Caco-2 (cell line): ENCODE measurements at regions of chr10 and their contacts with region 1.

Region 1: GRCh38 chr10:12710594-12711349 is 290.7 kb downstream of the CCDC3 start:
- DNase-seq: peak; percentile 74 to 90
- H3K4me3 ChIP-seq: no peak overlapping the region
- H3K4me3 Mint-ChIP-seq: peak overlapping the region; percentile 17
- H3K27ac Mint-ChIP-seq: peak overlapping the region; percentile 91
- H3K4me1 ChIP-seq: peaks cover 26% of the 10 kb centered on the region
- H3K4me1 Mint-ChIP-seq: peaks cover 34% of the 10 kb centered on the region
- H3K27me3 ChIP-seq: no peaks in the 10 kb centered on the region
- H3K27me3 Mint-ChIP-seq: no peaks in the 10 kb centered on the region
- CTCF ChIP-seq: peak; percentile 96 to 99

Region 2: DNA sequence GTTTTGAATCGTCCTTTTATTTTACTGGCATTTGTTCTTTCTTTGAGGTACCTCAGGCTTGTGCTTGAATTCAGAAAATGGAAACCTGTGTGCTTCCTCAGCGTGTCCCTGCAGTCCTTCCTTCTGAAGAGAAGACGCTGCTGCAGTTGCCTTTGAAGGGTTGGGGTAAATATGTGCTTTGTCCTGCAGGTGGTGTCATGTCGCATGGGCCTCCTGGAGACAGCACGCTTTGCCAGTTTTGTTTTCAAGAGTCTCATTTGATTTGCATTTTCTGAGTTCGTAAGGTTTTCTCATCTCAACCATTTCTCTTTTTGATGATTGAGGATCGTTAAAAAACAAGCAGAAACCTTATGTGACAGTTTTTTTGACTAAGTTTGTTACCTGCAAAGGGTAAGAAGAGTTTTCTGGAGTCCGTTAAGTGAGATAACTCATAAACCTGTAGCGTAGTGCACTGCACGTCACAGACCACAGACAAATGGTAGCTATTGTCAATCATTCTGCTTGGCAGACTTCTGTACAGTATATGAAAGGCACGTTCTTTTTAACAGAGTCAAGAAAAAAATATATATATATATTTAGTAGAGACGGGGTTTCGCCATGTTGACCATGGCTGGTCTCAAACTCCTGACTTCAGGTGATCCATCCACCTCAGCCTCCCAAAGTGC is 457.8 kb before region 1 on chr10:
- CTCF ChIA-PET with region 1: no interaction called
- POLR2A ChIA-PET with region 1: no interaction called
- intact Hi-C with region 1: loop called (anchors 2 kb)
- DNase-seq: peak; percentile 56 to 58
- H3K4me3 ChIP-seq: no peak overlapping the region
- H3K4me3 Mint-ChIP-seq: no peak overlapping the region
- H3K27ac Mint-ChIP-seq: no peak overlapping the region
- H3K4me1 ChIP-seq: 0 out of 2 replicates have a peak, but pooled peaks cover 3% of the 10 kb centered on the region
- H3K4me1 Mint-ChIP-seq: no peaks in the 10 kb centered on the region
- H3K27me3 ChIP-seq: no peaks in the 10 kb centered on the region
- H3K27me3 Mint-ChIP-seq: no peaks in the 10 kb centered on the region
- CTCF ChIP-seq: peak; percentile 64 to 82

Region 3: GRCh38 chr10:12568391-12569009 is 142.3 kb before region 1 on chr10:
- CTCF ChIA-PET with region 1: no interaction called
- POLR2A ChIA-PET with region 1: no interaction called
- intact Hi-C with region 1: no loop called
- DNase-seq: no peak
- H3K4me3 ChIP-seq: no peak overlapping the region
- H3K4me3 Mint-ChIP-seq: no peak overlapping the region
- H3K27ac Mint-ChIP-seq: no peak overlapping the region
- H3K4me1 ChIP-seq: no peaks in the 10 kb centered on the region
- H3K4me1 Mint-ChIP-seq: no peaks in the 10 kb centered on the region
- H3K27me3 ChIP-seq: no peaks in the 10 kb centered on the region
- H3K27me3 Mint-ChIP-seq: no peaks in the 10 kb centered on the region
- CTCF ChIP-seq: no peak

Region 4: DNA sequence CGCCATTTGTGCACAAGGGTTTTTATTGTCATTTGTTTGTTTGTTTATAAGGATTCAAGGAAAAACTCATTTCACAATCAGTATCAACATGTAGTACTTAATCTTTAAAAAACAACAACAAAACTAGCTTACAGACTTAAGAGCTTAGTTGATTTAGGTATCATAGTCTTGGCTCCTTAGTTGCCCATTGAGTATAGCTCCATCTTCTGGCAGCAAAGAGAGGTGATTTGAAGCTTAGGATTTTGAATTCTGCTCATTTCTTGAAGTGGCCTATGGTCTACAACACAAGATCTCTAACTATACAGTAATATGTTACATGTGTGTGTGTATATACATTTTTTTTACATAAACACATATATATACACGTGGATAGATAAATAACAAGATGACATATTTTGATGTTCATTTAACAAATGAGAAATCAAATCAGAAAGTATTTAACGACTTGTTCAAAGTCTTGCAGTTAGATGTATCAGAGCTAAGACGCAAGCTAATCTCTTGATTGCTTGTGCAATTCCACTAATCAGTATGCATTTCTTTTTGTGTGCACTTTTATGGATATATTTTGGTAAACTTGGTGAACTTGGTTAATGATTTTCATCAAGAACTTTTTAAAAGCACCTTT is 54.1 kb before region 1 on chr10:
- CTCF ChIA-PET with region 1: interaction called, 3 read pairs
- POLR2A ChIA-PET with region 1: no interaction called
- intact Hi-C with region 1: loop called (anchors 2 kb)
- DNase-seq: peak in 1 of 2 experiments; percentile 49
- H3K4me3 ChIP-seq: no peak overlapping the region
- H3K4me3 Mint-ChIP-seq: no peak overlapping the region
- H3K27ac Mint-ChIP-seq: no peak overlapping the region
- H3K4me1 ChIP-seq: no peaks in the 10 kb centered on the region
- H3K4me1 Mint-ChIP-seq: no peaks in the 10 kb centered on the region
- H3K27me3 ChIP-seq: no peaks in the 10 kb centered on the region
- H3K27me3 Mint-ChIP-seq: no peaks in the 10 kb centered on the region
- CTCF ChIP-seq: peak; percentile 75 to 84

Region 5: GRCh38 chr10:12667052-12667451 is 43.7 kb before region 1 on chr10:
- CTCF ChIA-PET with region 1: no interaction called
- POLR2A ChIA-PET with region 1: no interaction called
- intact Hi-C with region 1: no loop called
- DNase-seq: no peak
- H3K4me3 ChIP-seq: no peak overlapping the region
- H3K4me3 Mint-ChIP-seq: no peak overlapping the region
- H3K27ac Mint-ChIP-seq: no peak overlapping the region
- H3K4me1 ChIP-seq: no peaks in the 10 kb centered on the region
- H3K4me1 Mint-ChIP-seq: no peaks in the 10 kb centered on the region
- H3K27me3 ChIP-seq: no peaks in the 10 kb centered on the region
- H3K27me3 Mint-ChIP-seq: no peaks in the 10 kb centered on the region
- CTCF ChIP-seq: no peak

Region 6: GRCh38 chr10:12975266-12975665 is 264.5 kb after region 1 on chr10:
- CTCF ChIA-PET with region 1: no interaction called
- POLR2A ChIA-PET with region 1: no interaction called
- intact Hi-C with region 1: loop called (anchors 5 kb)
- DNase-seq: peak in 1 of 2 experiments; percentile 49
- H3K4me3 ChIP-seq: no peak overlapping the region
- H3K4me3 Mint-ChIP-seq: no peak overlapping the region
- H3K27ac Mint-ChIP-seq: no peak overlapping the region
- H3K4me1 ChIP-seq: peaks cover 3% of the 10 kb centered on the region; the same call in 1 of the 2 replicates
- H3K4me1 Mint-ChIP-seq: peaks cover 12% of the 10 kb centered on the region
- H3K27me3 ChIP-seq: no peaks in the 10 kb centered on the region
- H3K27me3 Mint-ChIP-seq: peaks cover 3% of the 10 kb centered on the region
- CTCF ChIP-seq: peak; percentile 51 to 77

Region 7: DNA sequence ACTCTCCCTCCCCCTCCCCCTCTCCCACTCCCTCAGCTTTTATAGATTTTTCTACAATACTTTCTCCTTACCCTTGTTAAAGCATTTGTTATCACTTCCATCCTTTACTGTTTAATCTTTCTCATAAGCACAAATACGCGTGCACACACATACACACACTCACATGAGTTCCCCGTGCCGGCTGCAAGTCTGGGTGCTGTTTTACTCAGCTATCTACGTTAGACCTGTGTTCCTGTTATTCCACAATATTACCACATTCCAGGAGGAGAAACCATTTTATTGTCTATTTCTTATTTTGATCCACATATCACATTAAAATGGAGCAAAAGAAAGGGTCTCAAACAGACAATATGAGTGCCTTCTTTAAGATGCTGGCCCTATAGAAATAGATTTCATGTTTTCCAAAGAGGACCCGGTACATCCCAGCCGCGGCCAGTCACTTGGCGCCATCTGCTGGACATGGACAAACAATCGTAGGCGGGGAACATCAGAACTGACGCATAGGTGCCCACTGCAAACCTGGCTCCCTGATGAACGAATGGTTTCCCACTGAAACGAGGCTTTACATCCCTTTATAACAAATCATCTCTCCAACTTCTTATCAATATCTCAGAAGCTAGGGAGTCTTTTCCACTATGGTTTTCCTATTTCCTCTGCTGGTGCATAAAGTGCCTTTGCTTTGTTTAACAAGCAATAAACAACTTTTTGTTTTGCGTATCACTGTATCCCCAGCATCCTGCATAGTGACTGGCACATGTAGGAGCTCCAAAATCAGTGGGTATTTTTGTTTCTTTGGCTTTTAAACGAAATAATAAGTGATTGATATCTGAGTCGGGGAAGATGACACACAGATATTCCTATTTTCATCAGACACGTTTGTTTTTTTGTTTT is 364.0 kb after region 1 on chr10:
- CTCF ChIA-PET with region 1: interaction called, 6 read pairs
- POLR2A ChIA-PET with region 1: interaction called, 3 read pairs
- intact Hi-C with region 1: loop called (anchors 1 kb)
- DNase-seq: peak; percentile 74 to 87
- H3K4me3 ChIP-seq: no peak overlapping the region
- H3K4me3 Mint-ChIP-seq: no peak overlapping the region
- H3K27ac Mint-ChIP-seq: no peak overlapping the region
- H3K4me1 ChIP-seq: no peaks in the 10 kb centered on the region
- H3K4me1 Mint-ChIP-seq: no peaks in the 10 kb centered on the region
- H3K27me3 ChIP-seq: no peaks in the 10 kb centered on the region
- H3K27me3 Mint-ChIP-seq: peaks cover 2% of the 10 kb centered on the region
- CTCF ChIP-seq: peak; percentile 95 to 97